ENCODE measurements at regions of chr2 and their contacts with region 1.

Region 1: DNA sequence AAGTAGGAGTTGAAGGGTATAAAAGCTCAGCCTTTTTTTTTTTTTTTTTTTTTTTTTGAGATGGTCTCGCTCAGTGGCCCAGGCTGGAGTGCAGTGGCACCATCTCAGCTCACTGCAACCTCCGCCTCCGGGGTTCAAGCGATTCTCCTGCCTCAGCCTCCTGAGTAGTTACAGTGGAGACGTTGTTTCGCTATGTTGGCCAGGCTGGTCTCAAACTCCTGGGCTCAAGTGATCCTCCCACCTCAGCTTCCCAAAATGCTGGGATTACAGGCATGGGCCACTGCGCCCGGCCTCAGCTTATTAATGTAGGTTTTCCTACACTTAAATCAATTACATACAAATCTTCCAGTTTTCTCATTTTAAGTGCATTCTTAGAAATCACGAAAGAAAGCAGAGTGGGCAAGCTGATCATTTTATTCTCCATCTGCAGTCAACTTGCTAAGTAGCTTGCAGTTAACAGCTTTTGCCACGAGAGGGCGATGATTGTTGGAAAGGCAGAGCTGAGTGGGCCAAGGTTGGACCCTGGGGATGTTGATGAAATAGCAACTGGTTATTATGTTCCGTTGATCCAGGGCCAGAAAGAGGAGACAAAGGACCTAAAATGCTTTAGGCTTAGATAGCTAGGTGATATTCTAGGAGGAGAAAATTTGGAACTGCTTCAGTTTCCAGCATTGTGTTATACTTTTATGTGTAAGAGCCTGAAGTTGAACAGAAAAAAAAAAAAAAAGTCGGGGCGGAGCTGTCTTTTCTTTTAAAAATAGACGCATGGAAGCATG is 234.4 kb upstream of the EPAS1 start:
- DNase-seq: no peak
- H3K4me3 ChIP-seq: no peak overlapping the region
- CTCF ChIP-seq: peak; percentile 78

Region 2: GRCh38 chr2:46010925-46011490 is 51.8 kb before region 1 on chr2:
- CTCF ChIA-PET with region 1: interaction called, 15 read pairs
- POLR2A ChIA-PET with region 1: no interaction called
- DNase-seq: no peak
- H3K4me3 ChIP-seq: no peak overlapping the region
- CTCF ChIP-seq: peak; percentile 37

Region 3: DNA sequence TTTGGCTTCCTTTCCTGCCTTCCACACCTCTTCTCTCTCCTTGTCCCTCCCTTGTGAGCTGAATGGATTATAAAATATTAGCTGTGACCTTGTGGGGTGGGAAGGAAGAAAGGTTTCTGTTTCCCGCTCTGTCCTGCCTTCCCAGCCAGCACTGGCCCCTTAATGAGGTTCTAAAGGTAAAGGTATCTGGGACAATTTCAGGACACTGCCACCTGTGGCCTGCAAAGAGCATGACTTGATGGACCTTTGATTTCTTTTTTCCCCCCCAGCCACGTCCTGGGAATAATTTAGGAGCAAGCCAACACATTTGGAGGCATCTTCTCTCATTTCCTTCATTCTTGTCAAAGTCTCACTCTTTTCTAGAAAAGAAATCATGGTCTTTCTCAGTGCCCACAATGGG is 12.3 kb before region 1 on chr2:
- CTCF ChIA-PET with region 1: interaction called, 112 read pairs
- POLR2A ChIA-PET with region 1: no interaction called
- DNase-seq: no peak
- H3K4me3 ChIP-seq: no peak overlapping the region
- CTCF ChIP-seq: no peak

Region 4: GRCh38 chr2:46117379-46117778 is 54.6 kb after region 1 on chr2:
- CTCF ChIA-PET with region 1: interaction called, 11 read pairs
- POLR2A ChIA-PET with region 1: no interaction called
- DNase-seq: no peak
- H3K4me3 ChIP-seq: no peak overlapping the region
- CTCF ChIP-seq: no peak

Region 5: GRCh38 chr2:46181789-46182530 is 119.1 kb after region 1 on chr2:
- CTCF ChIA-PET with region 1: interaction called, 11 read pairs
- POLR2A ChIA-PET with region 1: no interaction called
- DNase-seq: no peak
- H3K4me3 ChIP-seq: no peak overlapping the region
- CTCF ChIP-seq: no peak

Region 6: GRCh38 chr2:46309052-46309952 is 246.5 kb after region 1 on chr2:
- CTCF ChIA-PET with region 1: interaction called, 11 read pairs
- POLR2A ChIA-PET with region 1: interaction called, 3 read pairs
- DNase-seq: no peak
- H3K4me3 ChIP-seq: no peak overlapping the region
- CTCF ChIP-seq: no peak

Region 7: DNA sequence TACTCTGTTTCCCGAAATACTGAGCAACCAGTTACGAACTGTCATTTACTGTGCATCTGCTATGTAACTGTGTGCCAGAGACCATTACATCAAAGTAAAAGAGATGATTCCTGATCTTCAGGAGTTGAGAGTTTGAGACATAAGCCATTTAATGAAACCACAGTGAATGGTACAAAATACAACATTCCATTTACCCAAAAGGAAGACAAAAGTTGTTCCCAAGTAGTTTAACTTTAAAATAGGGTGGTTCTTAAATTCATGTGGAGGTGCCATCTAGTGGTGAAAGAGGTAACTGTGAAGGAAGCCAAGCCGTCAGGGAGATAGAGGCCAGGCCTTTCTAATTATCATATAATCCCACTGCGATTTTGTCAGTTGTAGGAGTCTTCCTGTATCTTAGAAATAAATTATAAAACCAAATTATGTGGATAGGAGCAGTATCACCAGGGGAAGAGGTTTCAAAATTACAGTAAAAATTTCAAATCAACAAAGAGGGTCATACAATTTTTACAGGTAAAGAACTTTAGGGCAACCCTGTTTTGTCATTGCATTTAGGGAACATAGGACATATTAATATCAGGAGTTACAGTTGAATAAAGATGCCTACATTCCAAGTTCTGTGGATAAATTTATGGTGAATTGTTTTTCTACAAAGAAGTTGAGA is 302.1 kb after region 1 on chr2:
- CTCF ChIA-PET with region 1: interaction called, 52 read pairs
- POLR2A ChIA-PET with region 1: no interaction called
- DNase-seq: peak; percentile 12
- H3K4me3 ChIP-seq: no peak overlapping the region
- CTCF ChIP-seq: peak; percentile 54

Measured in AG04449 (cell line).